ENCODE measurements at regions of chr9 and their contacts with region 1.

Region 1: DNA sequence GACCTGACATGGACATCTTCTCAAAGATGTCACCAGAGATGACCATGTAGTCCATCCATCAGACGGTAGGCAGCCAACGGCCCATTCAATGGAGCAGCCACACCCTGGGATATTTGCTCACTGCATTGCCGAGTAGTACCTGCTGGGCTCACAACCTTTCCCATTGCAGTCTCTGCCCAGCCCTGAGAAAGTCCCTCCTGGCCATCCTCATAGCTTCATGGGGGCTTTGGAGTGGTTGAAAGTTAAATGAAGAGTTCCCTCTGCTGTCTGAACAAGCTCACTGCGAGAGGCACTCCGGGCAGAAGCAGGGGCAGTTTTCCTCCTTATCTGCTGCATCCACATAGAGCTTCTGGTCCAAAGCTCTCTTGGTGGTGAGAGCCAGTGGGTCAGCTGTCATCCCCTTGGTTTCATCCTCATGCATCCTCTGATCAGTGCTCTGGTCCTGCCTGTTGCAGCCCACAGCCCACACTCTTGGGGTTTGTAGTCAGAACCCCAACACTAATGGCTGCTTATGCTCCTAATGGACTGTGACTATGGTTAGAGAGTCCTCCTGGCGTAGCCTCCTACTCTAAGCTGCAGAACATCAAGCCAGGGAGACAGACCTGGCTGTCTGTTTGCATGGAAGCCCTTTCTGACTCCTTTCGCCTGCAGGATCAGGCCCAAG is 23.4 kb downstream of the TNFSF8 start:
- DNase-seq: peak; percentile 47
- H3K4me3 Mint-ChIP-seq: peak overlapping the region; percentile 39
- H3K27ac Mint-ChIP-seq: peak overlapping the region; percentile 97
- H3K4me1 Mint-ChIP-seq: peaks cover 58% of the 10 kb centered on the region
- H3K27me3 Mint-ChIP-seq: no peaks in the 10 kb centered on the region

Region 2: GRCh38 chr9:114691046-114691955 is 215.7 kb before region 1 on chr9:
- CTCF ChIA-PET with region 1: interaction called, 18 read pairs
- DNase-seq: peak; percentile 82
- H3K4me3 Mint-ChIP-seq: peak overlapping the region; percentile 42
- H3K27ac Mint-ChIP-seq: peak overlapping the region; percentile 96
- H3K4me1 Mint-ChIP-seq: peaks cover 97% of the 10 kb centered on the region
- H3K27me3 Mint-ChIP-seq: no peaks in the 10 kb centered on the region

Region 3: GRCh38 chr9:114738581-114739316 is 168.3 kb before region 1 on chr9:
- CTCF ChIA-PET with region 1: interaction called, 213 read pairs
- DNase-seq: peak; percentile 79
- H3K4me3 Mint-ChIP-seq: no peak overlapping the region
- H3K27ac Mint-ChIP-seq: peak overlapping the region; percentile 88
- H3K4me1 Mint-ChIP-seq: peaks cover 70% of the 10 kb centered on the region
- H3K27me3 Mint-ChIP-seq: no peaks in the 10 kb centered on the region

Region 4: GRCh38 chr9:114894801-114895433 is 12.1 kb before region 1 on chr9:
- CTCF ChIA-PET with region 1: interaction called, 26 read pairs
- DNase-seq: no peak
- H3K4me3 Mint-ChIP-seq: no peak overlapping the region
- H3K27ac Mint-ChIP-seq: peak overlapping the region; percentile 77
- H3K4me1 Mint-ChIP-seq: peaks cover 14% of the 10 kb centered on the region
- H3K27me3 Mint-ChIP-seq: no peaks in the 10 kb centered on the region

Region 5: DNA sequence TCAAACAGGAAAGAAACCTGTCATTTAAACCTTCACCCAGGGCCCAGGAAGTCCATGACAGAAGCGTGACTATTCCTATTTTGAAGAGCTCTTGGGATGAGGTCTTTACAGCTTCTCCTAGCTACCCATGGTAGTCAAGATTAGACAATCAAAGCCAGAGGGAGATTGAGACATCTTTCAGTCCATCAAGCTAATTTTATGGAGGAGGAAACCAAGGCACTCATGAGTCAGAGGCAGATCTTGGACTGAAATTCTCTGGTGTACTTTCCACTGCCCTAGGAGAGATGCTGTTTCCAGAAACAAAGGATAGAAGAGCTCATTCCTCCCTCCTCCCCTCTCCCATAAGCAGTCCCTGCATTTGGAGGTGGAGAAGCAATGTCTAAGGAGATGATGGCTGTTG is 14.1 kb after region 1 on chr9:
- CTCF ChIA-PET with region 1: interaction called, 19 read pairs
- DNase-seq: no peak
- H3K4me3 Mint-ChIP-seq: no peak overlapping the region
- H3K27ac Mint-ChIP-seq: peak overlapping the region; percentile 25
- H3K4me1 Mint-ChIP-seq: peaks cover 91% of the 10 kb centered on the region
- H3K27me3 Mint-ChIP-seq: no peaks in the 10 kb centered on the region

Region 6: DNA sequence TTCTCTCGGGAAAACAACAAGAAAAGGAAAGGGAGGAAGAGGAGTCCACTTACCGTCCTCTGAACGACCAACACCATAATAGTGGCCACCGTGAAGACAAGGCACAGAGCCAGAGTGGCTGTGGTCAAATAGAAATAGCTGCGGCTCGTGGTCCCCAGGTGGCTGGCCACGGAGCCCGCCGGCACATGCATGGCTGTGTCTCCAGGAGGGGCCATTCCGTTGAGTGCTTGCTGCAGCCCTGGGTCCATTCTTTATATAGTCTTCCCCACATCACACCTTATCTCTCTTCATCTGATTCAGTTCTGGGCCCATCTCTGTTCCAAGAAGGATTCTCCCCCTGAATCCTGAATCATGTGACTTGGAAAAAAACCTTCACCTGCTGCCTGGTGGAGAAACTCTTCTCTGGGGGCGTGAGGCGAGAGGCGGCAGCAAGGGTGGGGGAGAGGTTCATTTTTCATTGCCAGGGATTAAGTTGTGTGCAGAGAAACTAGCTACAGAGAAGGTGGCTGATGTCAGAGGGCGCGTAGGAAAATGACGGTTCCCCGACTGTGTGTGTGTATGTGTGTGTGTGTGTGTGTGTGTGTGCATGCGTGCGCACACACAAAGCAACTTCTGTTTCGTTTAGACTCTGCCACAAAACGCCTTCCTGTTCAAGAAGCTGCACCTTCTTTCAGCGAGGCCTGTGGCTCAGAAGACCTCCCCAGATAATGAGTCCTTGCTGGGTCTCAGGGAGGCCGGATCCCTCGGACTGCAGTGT is 23.2 kb after region 1 on chr9 and contains the start of gene TNFSF8:
- CTCF ChIA-PET with region 1: interaction called, 54 read pairs
- DNase-seq: peak; percentile 87
- H3K4me3 Mint-ChIP-seq: peak within 1 kb of the TSS; percentile 97
- H3K27ac Mint-ChIP-seq: peak within 1 kb of the TSS; percentile 98
- H3K4me1 Mint-ChIP-seq: peaks cover 43% of the 10 kb centered on the region
- H3K27me3 Mint-ChIP-seq: no peaks in the 10 kb centered on the region

Region 7: GRCh38 chr9:114945616-114946412 is 38.8 kb after region 1 on chr9:
- CTCF ChIA-PET with region 1: no interaction called
- DNase-seq: no peak
- H3K4me3 Mint-ChIP-seq: no peak overlapping the region
- H3K27ac Mint-ChIP-seq: no peak overlapping the region
- H3K4me1 Mint-ChIP-seq: peaks cover 13% of the 10 kb centered on the region
- H3K27me3 Mint-ChIP-seq: peaks cover 4% of the 10 kb centered on the region

Region 8: DNA sequence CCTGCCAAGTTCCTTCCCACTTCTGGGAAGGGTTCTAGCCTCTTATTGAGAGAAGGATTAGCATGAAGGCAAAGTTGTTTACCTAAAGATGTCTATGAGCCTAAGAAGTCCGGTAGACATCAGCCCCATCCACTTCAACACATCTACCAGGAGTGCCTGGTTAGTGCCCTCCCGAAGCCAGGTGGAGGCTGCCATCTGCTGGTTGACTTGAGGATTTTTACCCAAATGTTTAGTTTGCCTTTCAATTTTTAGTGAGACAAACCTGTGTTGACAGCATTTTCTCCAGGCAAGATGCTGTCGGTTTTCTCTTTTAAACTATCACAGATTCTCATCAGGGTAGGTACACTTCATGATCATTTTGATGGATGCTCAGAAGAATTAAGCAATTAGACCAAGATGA is 107.0 kb after region 1 on chr9:
- CTCF ChIA-PET with region 1: interaction called, 126 read pairs
- DNase-seq: peak; percentile 89
- H3K4me3 Mint-ChIP-seq: no peak overlapping the region
- H3K27ac Mint-ChIP-seq: peak overlapping the region; percentile 76
- H3K4me1 Mint-ChIP-seq: peaks cover 46% of the 10 kb centered on the region
- H3K27me3 Mint-ChIP-seq: peaks cover 13% of the 10 kb centered on the region

Measured in activated naive CD4-positive, alpha-beta T cell treated with anti-CD3 and anti-CD28 coated beads, Interleukin-2, amount 10 ng/mL, durations not matched to agents 7 days and 5 days (primary cell).